PC-9 (cell line): ENCODE measurements at regions of chr6 and their contacts with region 1.

Region 1: DNA sequence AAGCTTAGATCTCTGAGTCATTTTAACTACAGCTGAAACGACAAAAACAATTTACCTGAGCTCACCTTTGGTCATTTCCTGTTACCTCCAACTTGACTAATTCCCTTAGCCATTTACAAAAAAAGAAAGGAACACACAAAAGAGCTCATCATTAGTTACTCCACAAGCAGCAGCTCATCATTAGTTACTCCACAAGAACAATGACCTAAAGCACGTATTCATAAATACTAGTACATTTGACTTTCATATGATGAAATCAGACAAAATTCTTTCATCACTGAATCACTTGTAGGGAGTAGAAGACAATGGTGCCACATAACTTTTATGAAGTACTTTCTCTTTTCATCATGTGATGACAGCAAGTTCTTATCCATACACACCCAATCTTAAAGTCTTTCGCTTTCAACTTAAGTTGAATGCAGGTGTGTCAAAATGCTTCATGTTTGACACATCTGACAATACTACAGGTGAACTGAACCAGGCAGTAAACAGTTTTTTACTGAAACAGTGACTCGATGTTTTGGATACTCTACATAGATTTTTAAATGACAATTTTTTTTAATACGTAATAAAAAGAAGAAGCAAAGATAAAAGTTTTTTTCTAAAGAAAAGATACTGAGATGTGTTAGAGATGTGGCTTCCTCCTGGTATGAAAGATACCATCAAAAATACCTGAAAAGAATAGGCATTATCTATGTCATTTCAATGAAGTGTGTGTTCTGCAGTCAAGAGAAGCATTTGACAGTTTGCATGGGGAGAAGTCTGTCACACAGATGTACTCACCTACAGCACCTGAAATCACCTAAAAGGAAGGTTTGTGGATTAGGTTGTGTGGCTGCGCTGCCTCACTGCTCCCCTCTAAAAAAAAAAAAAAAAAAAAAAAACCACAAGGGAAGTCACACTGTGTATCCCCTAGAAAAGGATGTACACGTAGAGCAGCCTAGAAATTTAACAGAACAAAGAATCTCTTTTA is 109.1 kb downstream of the PRDM1 start:
- DNase-seq: peak; percentile 4 to 94
- H3K4me3 ChIP-seq: 0 out of 2 replicates have a peak overlapping the region, but pooled peaks have one; percentile 10
- H3K27ac ChIP-seq: peak overlapping the region; percentile 92
- H3K4me1 ChIP-seq: peaks cover 25% of the 10 kb centered on the region
- H3K27me3 ChIP-seq: no peaks in the 10 kb centered on the region
- CTCF ChIP-seq: no peak

Region 2: DNA sequence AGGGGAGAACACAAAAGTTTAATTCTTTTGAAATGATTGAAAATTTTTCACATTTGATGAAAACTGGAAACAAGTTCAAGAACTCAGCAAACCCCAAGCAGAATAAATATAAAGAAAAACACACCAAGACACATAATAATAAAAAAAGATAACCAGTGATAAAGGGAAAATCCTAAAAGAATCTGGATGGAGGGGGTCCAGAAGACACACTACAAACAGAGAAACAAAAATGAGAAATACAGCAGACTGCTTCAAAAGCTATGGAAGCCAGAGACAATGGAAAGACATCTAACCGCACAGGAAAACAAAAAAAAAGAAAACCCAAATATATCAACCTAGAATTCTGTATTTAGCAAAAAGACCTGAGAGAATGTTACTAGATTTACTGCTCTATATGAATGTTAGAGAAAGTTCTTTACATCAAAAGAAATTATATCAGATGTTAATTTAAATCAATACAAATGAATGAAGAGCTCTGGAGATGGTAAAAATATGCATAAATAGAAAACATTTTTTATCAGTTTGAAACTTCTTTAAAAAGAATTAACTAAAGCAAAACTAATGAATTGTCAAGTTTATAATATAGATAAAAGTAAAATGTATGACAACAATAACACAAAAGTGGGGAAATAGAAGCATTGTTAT is 481.6 kb before region 1 on chr6:
- CTCF ChIA-PET with region 1: no interaction called
- POLR2A ChIA-PET with region 1: no interaction called
- intact Hi-C with region 1: no loop called
- DNase-seq: no peak
- H3K4me3 ChIP-seq: no peak overlapping the region; the same call in 1 of the 2 replicates
- H3K27ac ChIP-seq: no peak overlapping the region
- H3K4me1 ChIP-seq: no peaks in the 10 kb centered on the region
- H3K27me3 ChIP-seq: no peaks in the 10 kb centered on the region
- CTCF ChIP-seq: no peak

Region 3: DNA sequence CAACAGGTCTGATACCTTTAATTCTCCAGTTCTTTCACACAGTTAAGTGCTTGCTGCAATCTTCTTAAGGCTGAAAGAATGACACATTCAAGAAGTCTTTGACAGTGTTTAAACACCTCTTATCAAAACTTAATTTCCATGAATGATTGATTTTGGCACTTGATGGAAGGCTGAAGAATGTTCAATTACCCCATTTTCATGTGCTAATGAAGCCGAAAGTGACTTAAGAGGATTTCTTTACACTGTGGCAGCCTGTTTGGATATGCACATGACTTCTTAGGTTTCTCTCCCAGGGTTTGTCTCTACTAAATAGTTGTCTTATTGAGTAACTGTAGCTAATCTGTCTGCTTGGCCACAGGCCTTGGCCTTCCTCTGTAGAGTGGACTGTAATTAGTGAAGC is 190.2 kb before region 1 on chr6:
- CTCF ChIA-PET with region 1: no interaction called
- POLR2A ChIA-PET with region 1: no interaction called
- intact Hi-C with region 1: no loop called
- DNase-seq: no peak
- H3K4me3 ChIP-seq: no peak overlapping the region
- H3K27ac ChIP-seq: no peak overlapping the region
- H3K4me1 ChIP-seq: no peaks in the 10 kb centered on the region
- H3K27me3 ChIP-seq: no peaks in the 10 kb centered on the region
- CTCF ChIP-seq: no peak

Region 4: DNA sequence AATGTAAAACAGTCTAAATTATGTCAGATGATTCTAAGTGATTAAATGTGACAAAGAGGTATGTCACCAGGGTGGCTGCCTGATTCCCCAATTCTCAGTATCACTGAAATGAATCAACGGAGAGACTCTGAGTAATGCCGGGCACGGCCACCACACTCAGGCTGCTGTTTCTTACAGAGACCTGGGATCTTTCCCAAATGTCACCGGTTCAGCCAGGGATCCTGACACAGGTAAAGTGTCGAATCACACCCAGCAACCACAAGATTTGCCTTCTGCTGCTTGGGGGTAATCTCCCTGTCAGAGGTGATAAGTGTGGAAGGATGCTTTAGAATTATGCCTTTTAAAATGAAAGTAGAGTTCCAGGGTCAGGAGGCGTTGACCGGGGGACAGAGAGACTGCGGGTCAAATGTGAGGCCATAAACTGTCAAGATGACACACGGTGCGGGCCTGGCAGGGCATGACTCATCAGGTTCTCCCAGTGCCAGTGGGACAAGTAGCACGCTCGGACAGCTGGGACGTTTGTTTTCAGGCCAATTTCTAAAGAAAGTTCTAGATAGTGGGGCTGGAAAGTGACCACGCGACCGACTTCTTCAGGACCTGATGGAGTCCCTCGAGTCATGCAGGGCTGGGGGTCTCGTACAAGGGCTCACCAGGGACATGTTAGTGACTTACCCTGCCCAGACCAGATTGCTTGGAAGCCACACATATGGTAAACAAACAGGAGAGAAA is 60.2 kb before region 1 on chr6:
- CTCF ChIA-PET with region 1: no interaction called
- POLR2A ChIA-PET with region 1: no interaction called
- intact Hi-C with region 1: loop called (anchors 2 kb)
- DNase-seq: peak; percentile 69 to 89
- H3K4me3 ChIP-seq: peak overlapping the region; percentile 39; the same call in 1 of the 2 replicates
- H3K27ac ChIP-seq: peak overlapping the region; percentile 93
- H3K4me1 ChIP-seq: peaks cover 37% of the 10 kb centered on the region
- H3K27me3 ChIP-seq: no peaks in the 10 kb centered on the region
- CTCF ChIP-seq: no peak

Region 5: GRCh38 chr6:106300944-106301343 is 105.7 kb after region 1 on chr6:
- CTCF ChIA-PET with region 1: no interaction called
- POLR2A ChIA-PET with region 1: no interaction called
- intact Hi-C with region 1: no loop called
- DNase-seq: no peak
- H3K4me3 ChIP-seq: no peak overlapping the region
- H3K27ac ChIP-seq: no peak overlapping the region
- H3K4me1 ChIP-seq: no peaks in the 10 kb centered on the region
- H3K27me3 ChIP-seq: no peaks in the 10 kb centered on the region
- CTCF ChIP-seq: peak; percentile 75

Region 6: DNA sequence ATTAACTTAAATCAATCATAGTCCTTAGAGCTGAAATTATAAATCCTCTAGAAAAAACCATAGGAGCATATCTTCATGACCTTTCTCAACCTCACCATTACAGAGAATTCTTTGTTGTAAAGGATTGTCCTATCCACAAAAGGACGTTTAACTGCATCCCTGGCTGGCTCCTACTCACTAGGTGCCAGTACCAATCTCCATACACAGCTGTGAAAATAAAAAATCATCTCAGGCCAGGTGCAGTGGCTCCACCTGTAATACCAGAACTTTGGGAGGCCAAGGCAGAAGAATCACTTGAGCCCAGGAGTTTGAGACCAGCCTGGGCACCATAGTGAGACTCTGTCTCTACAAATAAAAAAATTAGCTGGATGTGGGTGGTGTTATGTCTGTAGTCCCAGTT is 1174.3 kb after region 1 on chr6:
- CTCF ChIA-PET with region 1: no interaction called
- POLR2A ChIA-PET with region 1: no interaction called
- intact Hi-C with region 1: no loop called
- DNase-seq: no peak
- H3K4me3 ChIP-seq: no peak overlapping the region
- H3K27ac ChIP-seq: no peak overlapping the region
- H3K4me1 ChIP-seq: no peaks in the 10 kb centered on the region
- H3K27me3 ChIP-seq: no peaks in the 10 kb centered on the region
- CTCF ChIP-seq: no peak